ENCODE measurements at regions of chr1 and their contacts with region 1.

Region 1: DNA sequence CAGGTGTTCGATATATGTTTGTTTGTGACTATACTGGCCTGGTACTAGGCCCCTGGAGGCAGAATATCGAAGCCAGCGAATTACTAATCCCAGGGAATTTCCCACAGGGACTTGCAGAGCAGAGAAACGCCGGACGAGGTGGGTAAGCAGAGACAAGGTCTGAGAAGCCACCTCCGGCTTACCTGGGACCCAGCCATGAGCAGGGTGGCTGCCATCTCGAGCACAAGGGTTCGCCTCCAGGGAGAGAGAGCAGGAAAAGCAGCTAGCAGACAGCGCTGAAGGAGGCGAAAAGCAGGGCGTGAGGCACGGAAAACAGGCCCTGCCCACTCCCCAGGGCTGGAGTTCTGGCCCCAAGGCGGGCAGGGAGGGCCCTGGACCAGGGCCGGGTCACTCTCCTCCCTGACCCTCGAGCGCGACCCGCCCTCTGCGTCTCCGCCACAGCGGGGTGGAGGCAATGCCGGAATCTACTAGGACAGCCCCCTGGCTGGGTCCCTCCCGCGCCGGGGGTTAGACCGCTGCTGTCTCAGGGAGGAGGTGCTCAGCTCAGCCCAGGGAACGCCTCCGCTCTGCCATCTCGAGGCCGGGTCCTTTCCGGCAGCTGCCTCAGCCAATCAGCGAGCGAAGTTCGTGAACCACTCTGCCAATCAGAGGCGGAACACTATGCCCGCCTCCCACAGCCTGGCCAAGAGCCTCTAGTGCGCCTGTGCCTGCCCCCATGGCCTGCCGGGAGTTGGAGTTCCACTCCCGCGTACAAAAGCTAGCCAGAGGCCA is 1.7 kb downstream of the ZNF436 start:
- DNase-seq: peak; percentile 99
- ATAC-seq: peak; percentile 90 to 94

Region 2: DNA sequence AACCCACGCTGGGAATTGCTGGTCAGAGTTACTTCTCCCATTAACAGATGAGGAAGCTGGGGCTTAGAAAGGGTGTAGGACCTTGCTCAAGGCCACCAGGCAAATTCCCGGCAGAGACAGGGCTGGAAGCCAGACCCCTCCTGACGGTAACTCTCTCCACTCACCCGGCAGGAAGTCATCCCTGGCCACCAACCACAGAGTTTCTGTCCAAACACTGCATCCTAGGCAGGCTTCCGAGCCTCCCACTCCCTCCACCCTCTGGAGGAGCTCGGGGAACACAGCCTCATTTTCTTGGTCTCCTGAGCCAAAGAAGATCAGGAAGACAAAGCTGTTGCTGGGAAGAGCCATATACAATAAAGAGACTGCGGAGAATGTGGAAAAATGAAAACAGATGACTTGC is 26.7 kb after region 1 on chr1:
- intact Hi-C with region 1: loop called in 1 of 2 experiments (anchors 2 kb)
- DNase-seq: peak; percentile 89
- ATAC-seq: peak; percentile 81 to 83

Measured in left cardiac atrium (tissue), 4 donors.